GM10248 (cell line): ENCODE measurements at regions of chr2 and their contacts with region 1.

Region 1: GRCh38 chr2:159172403-159172802 is 114.1 kb downstream of the WDSUB1 start:
- DNase-seq: no peak
- CTCF ChIP-seq: no peak

Region 2: DNA sequence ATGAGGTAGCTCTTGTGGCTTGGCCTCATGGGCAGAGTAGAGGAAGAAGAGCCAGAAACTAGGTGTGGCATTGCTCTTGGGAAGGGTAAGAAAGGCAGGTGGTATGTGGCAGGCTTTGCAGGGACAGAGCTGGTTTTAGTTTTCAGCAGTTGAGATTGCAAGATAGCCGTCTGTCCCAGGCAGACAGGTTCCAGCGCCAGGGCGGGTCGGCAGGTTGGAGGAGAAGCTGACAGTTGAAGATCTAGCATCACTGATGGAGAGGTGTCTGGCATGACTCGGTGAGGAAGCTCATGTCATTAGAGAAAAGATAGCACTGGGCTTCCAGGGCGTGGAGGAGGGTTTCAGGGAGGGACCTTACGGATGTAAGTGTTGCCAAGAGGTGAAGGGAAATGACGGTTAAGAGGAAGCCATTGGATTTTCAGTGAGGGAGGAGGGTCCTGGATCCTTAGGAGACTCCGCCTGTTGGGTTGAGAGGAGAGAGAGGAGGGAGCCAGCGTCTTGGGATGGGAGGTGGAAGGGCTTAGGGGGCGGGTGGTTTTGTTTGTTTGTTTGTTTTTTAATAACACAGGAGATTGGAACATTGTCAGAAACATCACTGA is 10.8 kb after region 1 on chr2:
- CTCF ChIA-PET with region 1: interaction called, 10 read pairs
- POLR2A ChIA-PET with region 1: no interaction called
- DNase-seq: no peak
- CTCF ChIP-seq: no peak

Region 3: GRCh38 chr2:159209341-159210306 is 37.2 kb after region 1 on chr2:
- CTCF ChIA-PET with region 1: no interaction called
- POLR2A ChIA-PET with region 1: no interaction called
- DNase-seq: no peak
- CTCF ChIP-seq: no peak